ENCODE measurements at regions of chr10 and their contacts with region 1.

Region 1: GRCh38 chr10:74826142-74827044 is at the start of gene KAT6B:
- DNase-seq: peak; percentile 100
- H3K4me3 ChIP-seq: peak within 1 kb of the TSS; percentile 97 to 99
- H3K27ac ChIP-seq: peak within 1 kb of the TSS; percentile 100
- H3K4me1 ChIP-seq: peaks cover 56% of the 10 kb centered on the region
- H3K27me3 ChIP-seq: no peaks in the 10 kb centered on the region
- CTCF ChIP-seq: peak in 2 of 3 experiments; percentile 8 to 29
- POLR2A ChIP-seq: peak in 1 of 2 donors; percentile 61
- total RNA-seq, gene KAT6B: 59.2 TPM

Region 2: DNA sequence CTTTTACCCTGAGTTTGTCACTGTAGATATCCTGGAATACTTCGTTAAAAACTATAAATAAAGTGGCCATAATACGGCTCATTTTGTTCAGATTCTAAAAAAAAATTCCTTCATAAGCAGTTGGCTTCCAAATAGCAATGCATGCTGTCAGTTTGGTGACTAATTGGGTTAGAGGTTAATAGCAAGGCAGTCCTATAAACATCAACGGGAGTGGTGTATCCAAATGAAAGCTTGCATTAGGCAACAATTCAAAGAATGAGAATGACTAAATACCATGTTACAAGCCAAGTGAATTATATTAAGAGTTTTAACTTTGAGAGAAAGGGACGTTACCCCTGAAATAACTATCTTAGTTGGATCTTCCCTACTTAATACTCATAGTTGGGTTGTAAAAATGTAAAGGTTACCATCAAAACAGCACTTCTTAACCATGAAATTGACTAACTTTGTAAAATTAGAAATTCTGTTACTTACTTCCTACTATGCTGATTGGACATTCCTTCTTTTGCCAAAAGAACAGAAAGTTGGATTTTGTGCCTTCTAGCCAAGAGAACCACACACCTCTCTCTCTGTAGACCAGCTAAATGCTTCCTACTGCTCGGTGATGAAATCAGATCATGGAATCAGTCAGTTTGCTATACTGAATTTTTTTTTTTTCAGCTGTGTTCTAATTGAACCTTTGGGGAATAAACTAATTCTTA is 98.0 kb after region 1 on chr10:
- intact Hi-C with region 1: loop called (anchors 10 kb)
- DNase-seq: no peak
- H3K4me3 ChIP-seq: no peak overlapping the region
- H3K27ac ChIP-seq: peak overlapping the region; percentile 69
- H3K4me1 ChIP-seq: peaks cover 80% of the 10 kb centered on the region
- H3K27me3 ChIP-seq: no peaks in the 10 kb centered on the region
- CTCF ChIP-seq: no peak
- POLR2A ChIP-seq: no peak

Region 3: DNA sequence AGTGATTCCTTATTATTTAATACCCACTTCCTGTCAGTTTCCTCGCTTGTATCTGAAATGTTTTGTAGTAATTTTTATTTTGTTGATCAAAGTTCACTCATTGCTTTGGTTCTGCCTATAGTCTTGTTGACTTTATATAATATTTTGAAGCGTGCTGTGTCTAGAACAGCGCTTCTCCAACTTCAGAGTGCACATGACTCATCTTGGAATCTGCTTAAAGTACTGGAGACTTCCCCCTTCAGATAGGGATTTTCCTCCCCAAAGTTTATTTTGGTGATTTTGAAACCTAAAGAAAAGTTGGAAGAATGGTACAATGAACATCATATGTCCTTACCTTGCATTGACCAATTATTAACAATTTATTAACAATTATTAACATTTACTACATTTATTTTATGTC is 403.6 kb after region 1 on chr10:
- intact Hi-C with region 1: loop called (anchors 10 kb)
- DNase-seq: no peak
- H3K4me3 ChIP-seq: no peak overlapping the region
- H3K27ac ChIP-seq: no peak overlapping the region
- H3K4me1 ChIP-seq: peaks cover 66% of the 10 kb centered on the region
- H3K27me3 ChIP-seq: no peaks in the 10 kb centered on the region
- CTCF ChIP-seq: no peak
- POLR2A ChIP-seq: no peak

Measured in vagina (tissue), 2 donors.